Vagina (tissue), 2 donors: ENCODE measurements at regions of chr4 and their contacts with region 1.

Region 1: DNA sequence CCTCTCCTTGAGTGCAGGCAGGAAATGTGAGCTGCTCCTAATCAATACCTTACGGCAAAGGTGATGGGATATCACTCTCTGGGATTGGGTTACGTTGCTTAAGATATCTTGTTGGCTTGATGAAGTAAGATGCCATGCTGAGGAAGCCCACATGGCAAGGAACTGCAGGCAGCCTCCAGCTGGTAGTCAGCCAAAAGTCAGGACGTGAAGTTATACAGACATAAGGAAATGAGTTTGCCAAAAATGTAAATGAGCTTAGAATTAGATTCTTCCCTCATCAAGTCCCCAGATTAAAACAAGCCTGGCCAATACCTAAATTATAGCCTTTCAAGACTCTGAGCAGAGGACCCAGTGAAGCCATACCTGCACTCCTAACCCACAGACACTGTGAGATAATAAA is 155.0 kb downstream of the QDPR start:
- DNase-seq: no peak
- H3K4me3 ChIP-seq: no peak overlapping the region
- H3K27ac ChIP-seq: no peak overlapping the region
- H3K4me1 ChIP-seq: no peaks in the 10 kb centered on the region
- H3K27me3 ChIP-seq: no peaks in the 10 kb centered on the region
- CTCF ChIP-seq: no peak
- POLR2A ChIP-seq: no peak

Region 2: DNA sequence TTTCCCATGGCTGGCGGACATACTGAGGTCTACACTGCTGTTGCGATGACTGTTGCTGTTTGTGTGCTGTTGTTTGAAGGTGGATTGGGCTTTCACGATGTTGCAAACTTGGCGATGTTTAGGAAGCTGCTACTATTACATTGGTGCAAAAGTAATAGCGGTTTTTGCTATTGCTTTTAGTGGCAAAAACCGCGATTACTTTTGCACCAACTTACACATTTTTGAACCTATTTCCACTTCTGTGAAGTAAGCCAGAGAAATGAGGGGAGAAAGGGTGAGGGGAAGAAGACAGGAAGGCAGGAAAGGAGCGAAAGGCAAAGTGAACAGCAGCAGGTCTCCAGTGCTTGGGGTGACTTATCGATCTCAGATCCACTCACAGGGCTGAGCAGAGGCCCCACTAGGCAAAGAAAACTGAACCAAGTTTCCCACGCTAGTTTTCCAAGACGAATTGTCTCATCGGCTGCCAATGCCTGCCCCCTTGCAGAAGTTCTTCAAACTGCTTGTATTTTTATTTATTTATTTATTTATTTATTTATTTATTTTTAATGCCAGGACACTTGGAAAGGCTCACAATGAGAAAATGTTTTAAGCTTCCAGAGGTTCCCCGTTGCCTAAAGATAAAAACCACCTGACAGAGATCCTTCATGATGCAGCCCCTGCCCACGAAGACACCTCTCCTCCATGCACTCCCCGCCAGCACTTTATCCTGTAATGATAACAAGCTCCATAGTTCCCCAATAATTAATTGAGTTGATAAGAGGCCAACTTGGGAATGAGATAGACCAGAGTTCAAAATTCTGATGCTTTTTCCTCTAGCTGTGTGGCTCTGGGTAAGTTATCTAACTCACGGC is 111.7 kb after region 1 on chr4:
- intact Hi-C with region 1: loop called (anchors 10 kb)
- DNase-seq: no peak
- H3K4me3 ChIP-seq: no peak overlapping the region
- H3K27ac ChIP-seq: no peak overlapping the region
- H3K4me1 ChIP-seq: no peaks in the 10 kb centered on the region
- H3K27me3 ChIP-seq: no peaks in the 10 kb centered on the region
- CTCF ChIP-seq: peak in 1 of 3 experiments; percentile 44
- POLR2A ChIP-seq: no peak